ENCODE measurements at regions of chr19 and their contacts with region 1.

Region 1: DNA sequence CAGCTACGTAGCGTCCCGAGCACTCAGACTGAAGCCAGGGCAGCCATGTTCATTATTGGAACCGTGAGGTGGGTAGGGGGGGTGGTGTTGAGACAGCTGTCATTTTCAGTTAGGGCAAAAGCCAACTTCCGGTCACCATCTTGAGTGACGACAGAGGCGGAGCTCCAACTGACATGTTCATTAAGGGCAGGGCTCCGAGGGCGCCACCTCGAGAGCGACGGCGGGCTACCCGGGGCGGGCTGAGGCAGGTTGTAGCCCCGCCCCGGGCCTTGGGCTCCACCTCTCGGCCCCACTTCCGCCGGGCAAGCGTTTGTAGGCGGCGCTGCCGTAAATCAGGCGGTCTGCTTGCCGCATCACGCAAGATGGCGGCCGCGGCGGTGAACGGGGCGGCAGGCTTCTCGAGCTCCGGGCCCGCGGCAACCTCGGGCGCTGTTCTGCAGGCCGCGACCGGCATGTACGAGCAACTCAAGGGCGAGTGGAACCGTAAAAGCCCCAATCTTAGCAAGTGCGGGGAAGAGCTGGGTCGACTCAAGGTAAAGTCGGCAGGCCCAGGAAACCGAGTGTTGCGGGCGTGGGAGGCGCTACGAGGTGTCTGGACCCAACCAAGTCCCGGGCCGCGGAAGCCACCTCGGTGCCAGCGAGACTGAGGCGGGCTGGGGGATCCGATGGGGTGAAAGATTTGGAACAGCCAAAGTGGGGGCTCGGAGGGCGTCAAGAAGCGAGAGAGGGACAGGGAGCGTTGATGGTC is at the start of gene PSMD8:
- DNase-seq: peak; percentile 100
- H3K4me3 Mint-ChIP-seq: peak within 1 kb of the TSS; percentile 84
- H3K27ac Mint-ChIP-seq: peak within 1 kb of the TSS; percentile 98
- H3K4me1 Mint-ChIP-seq: peaks cover 19% of the 10 kb centered on the region
- H3K27me3 Mint-ChIP-seq: no peaks in the 10 kb centered on the region
- CTCF ChIP-seq: no peak
- total RNA-seq, gene PSMD8: 289 and 311 TPM in 2 replicates

Region 2: DNA sequence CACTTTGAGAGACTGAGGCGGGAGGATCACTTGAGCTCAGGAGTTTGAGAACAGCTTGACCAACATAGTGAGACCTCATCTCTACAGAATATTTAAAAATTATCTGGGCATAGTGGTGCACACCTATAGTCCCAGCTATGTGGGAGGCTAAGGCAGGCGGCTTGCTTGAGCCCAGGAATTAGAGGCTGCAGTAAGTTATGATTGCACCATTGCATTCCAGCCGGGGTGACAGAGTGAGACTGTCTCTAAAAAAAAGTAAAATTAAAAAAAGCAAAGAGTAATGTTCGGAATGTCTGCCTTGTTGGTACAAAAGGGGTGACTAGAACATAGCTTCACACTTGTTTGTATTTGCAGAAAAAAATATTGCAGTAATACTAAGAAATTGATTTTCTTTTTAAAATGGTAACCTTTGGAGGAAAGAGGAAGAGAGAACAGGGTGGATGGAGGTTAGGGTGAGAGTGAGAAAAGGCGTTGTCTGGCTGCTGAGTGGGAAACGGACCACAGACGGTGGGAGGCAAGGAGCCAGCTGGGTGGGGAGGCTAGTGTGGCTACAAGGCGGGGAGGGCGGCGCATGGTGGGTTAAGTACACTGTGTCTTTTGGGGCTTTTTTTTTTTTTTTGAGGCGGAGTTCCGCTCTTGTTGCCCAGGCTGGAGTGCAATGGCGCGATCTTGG is 128.6 kb before region 1 on chr19:
- CTCF ChIA-PET with region 1: interaction called, 12 read pairs
- POLR2A ChIA-PET with region 1: interaction called, 18 read pairs
- intact Hi-C with region 1: no loop called
- DNase-seq: no peak
- H3K4me3 Mint-ChIP-seq: no peak overlapping the region
- H3K27ac Mint-ChIP-seq: no peak overlapping the region
- H3K4me1 Mint-ChIP-seq: peaks cover 16% of the 10 kb centered on the region
- H3K27me3 Mint-ChIP-seq: no peaks in the 10 kb centered on the region
- CTCF ChIP-seq: no peak

Region 3: DNA sequence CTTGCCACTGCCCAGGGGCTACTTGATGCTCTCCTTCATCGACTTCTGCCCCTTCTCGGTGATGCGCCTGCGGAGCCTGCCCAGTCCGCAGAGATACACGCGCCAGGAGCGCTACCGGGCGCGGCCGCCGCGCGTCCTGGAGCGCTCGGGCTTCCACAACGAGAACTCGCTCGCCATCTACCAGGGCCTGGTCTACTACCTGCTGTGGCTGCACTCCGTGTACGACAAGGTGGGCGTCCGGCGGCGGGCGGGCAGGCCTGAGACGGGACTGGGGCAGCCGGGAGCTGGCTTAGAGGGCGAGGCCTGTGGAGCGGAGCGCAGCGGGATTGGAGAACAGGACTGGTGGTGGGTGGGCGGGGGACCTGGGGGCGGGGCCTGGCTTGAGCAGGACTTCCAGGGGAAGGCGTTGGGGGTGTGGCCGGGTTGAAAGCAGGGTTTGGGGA is 12.9 kb before region 1 on chr19:
- CTCF ChIA-PET with region 1: interaction called, 4 read pairs
- POLR2A ChIA-PET with region 1: interaction called, 13 read pairs
- intact Hi-C with region 1: no loop called
- DNase-seq: peak; percentile 80
- H3K4me3 Mint-ChIP-seq: peak overlapping the region; percentile 80
- H3K27ac Mint-ChIP-seq: no peak overlapping the region
- H3K4me1 Mint-ChIP-seq: no peaks in the 10 kb centered on the region
- H3K27me3 Mint-ChIP-seq: peaks cover 29% of the 10 kb centered on the region
- CTCF ChIP-seq: no peak

Region 4: DNA sequence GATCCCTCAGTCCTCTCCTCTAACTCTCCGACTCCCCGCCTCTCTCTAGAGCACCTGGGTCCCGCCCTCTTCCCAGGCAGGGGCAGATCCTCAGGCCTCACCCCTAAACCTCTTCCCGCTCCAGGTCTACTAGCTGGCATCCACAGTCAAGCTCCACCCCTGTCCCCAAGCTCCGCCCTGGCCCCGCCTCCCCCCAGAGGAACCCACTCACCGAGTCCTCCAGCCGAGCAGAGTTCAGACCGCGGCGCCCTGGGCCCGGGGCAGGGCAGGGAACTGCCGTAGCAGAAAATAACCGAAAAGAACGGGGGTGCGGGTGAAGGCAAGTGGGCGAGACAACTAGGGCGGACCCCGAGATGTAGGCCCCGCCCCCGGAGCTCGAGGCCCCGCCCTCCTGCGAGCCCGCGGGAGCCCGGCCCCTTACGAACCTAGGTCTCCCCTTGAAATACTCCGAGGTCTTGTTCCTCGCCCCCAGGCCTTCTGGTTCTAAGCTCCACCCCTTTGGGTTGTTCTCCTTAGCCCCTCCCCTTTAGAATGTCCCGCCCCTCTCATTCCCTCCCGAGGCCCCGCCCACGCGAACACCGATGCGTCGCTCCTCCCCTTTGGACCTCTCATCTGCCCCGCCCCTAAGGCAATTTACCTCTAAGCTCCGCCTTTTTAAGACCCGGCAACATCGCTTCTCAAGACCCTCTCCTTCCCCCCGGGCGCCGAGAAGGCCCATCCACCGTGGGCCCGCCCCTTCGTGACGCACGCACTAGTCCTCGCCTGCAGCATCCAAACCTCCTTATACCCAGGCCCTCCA is 13.1 kb after region 1 on chr19 and contains the start of gene GGN:
- CTCF ChIA-PET with region 1: interaction called, 3 read pairs
- POLR2A ChIA-PET with region 1: interaction called, 46 read pairs
- intact Hi-C with region 1: loop called (anchors 1 kb)
- DNase-seq: peak; percentile 97
- H3K4me3 Mint-ChIP-seq: peak within 1 kb of the TSS; percentile 86
- H3K27ac Mint-ChIP-seq: no peak within 1 kb of the TSS
- H3K4me1 Mint-ChIP-seq: peaks cover 16% of the 10 kb centered on the region
- H3K27me3 Mint-ChIP-seq: no peaks in the 10 kb centered on the region
- CTCF ChIP-seq: no peak
- total RNA-seq, gene GGN: 0.27 and 1.4 TPM in 2 replicates

Region 5: DNA sequence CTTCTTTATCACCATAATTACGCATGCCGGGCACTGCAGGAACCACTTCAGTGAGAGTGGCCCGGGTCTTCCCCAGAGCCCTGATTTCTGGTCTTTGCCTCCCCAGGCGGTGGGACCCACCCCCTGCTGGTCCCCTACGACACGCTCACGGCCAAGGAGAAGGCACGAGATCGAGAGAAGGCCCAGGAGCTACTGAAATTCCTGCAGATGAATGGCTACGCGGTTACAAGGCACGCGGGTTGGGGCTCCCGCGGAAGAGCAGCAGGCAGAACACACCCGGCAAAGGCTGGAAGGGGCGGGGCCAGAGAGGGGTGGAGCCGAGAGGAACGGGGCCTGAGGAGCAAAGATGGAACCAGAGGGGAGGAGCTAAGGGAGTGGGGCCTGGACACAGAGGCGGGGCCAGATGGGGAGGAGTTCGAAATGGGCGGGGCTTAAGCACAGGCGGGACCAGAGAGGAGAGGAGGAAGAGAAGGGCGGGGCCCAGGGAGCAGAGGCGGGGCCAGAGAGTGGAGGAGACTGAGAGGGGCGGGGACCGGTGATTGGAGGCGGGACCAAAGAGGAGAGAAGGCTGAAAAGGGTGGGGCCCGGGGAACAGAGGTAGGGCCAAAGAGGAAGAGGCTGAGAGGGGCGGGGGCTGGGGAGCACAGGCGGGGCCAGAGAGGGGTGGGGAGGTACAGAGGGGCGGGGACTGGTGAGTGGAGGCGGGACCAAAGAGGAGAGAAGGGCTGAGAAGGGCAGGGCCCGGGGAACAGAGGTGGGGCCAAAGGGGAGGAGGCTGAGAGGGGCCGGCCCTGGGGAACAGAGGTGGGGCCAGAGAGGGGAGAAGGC is 132.3 kb after region 1 on chr19:
- CTCF ChIA-PET with region 1: no interaction called
- POLR2A ChIA-PET with region 1: no interaction called
- intact Hi-C with region 1: no loop called
- DNase-seq: peak; percentile 94
- H3K4me3 Mint-ChIP-seq: no peak overlapping the region
- H3K27ac Mint-ChIP-seq: no peak overlapping the region
- H3K4me1 Mint-ChIP-seq: no peaks in the 10 kb centered on the region
- H3K27me3 Mint-ChIP-seq: peaks cover 25% of the 10 kb centered on the region
- CTCF ChIP-seq: no peak

Measured in MCF 10A (cell line).